Activated CD4-positive, alpha-beta T cell treated with anti-CD3 and anti-CD28 coated beads, Interleukin-2, amount 10 ng/mL, durations not matched to agents 24 days and 14 days (primary cell): ENCODE measurements at regions of chr4 and their contacts with region 1.

Region 1: DNA sequence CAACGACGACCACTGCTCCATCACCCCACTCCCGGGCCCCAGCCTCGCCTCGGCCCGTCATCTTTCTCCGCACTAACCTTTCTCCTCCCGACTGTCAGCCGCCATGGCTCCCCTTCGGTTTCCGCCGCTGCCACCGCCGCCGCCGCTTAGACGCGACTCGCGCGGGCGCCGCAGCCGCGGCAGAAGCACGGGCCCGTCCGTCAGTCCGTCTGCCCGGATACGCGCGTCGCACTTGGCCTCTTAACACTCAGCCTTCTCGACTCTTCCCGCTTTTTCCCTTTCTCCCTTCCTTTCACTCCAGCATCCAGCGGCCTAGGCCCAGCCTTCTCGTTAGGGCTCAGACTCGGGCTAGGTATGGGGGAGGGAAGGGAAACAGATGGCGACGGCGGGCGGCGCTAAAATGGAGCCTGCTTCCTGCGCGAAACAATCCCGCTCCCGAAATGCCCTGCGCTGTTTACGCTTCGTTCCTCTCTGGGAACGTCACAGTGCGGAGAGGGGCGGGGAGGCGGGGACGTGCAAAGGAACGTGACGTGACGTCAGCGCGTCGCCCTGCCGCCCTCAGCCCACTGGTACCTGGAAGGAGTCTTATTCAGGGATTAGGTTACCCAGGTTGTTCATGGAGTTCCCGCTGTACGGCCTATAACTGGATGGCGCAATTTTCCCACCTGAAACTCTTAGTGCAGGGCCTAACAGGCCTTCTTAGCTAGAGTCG is at the start of gene YTHDC1:
- DNase-seq: peak; percentile 98
- H3K4me3 Mint-ChIP-seq: peak within 1 kb of the TSS; percentile 88
- H3K27ac Mint-ChIP-seq: peak within 1 kb of the TSS; percentile 93
- H3K4me1 Mint-ChIP-seq: peaks cover 23% of the 10 kb centered on the region
- H3K27me3 Mint-ChIP-seq: peaks cover 15% of the 10 kb centered on the region
- total RNA-seq, gene YTHDC1: 79.9 and 83.9 TPM in 2 replicates

Region 2: DNA sequence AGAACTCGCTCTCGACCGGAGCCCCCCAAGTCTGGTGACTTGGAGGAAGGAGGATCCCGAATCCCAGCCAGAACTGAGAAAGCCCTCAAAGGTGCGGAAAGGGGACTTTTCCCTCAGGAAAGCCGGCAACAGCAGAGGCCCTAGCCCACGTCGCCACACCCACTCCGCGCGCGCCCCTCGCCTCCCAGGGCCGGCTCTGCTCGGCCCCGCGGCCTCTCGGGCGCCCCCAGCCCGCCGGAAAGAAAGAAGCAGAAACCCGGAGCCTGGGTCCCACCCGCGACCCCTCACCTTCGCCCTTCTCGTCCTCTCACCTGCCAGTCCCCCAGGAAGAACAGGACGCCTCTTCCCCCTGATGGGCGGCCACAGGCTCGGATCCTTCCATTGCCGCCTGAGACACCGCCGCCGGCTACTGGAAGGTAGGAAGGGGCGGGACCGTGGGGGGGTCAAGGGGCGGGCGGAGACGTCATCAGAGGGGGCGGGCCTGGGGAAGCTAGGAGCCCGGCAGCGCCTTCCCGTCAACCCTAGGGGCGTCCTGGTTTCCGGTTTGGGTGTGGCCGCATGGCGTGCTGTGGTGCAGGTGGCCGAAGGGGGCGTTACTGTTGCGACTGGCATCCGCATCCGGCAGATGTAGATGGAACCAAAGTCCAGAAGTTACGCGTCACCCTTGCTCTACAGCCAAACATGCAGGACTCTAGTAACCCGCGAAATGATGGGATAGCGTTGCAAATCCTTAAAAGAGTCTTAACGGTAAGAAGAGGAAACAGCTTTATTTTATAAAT is 648.9 kb before region 1 on chr4 and contains the start of gene UBA6:
- intact Hi-C with region 1: loop called (anchors 1 kb)
- DNase-seq: peak; percentile 98
- H3K4me3 Mint-ChIP-seq: peak within 1 kb of the TSS; percentile 96
- H3K27ac Mint-ChIP-seq: peak within 1 kb of the TSS; percentile 97
- H3K4me1 Mint-ChIP-seq: peaks cover 46% of the 10 kb centered on the region
- H3K27me3 Mint-ChIP-seq: no peaks in the 10 kb centered on the region
- total RNA-seq, gene UBA6: 78.2 and 85.4 TPM in 2 replicates

Region 3: DNA sequence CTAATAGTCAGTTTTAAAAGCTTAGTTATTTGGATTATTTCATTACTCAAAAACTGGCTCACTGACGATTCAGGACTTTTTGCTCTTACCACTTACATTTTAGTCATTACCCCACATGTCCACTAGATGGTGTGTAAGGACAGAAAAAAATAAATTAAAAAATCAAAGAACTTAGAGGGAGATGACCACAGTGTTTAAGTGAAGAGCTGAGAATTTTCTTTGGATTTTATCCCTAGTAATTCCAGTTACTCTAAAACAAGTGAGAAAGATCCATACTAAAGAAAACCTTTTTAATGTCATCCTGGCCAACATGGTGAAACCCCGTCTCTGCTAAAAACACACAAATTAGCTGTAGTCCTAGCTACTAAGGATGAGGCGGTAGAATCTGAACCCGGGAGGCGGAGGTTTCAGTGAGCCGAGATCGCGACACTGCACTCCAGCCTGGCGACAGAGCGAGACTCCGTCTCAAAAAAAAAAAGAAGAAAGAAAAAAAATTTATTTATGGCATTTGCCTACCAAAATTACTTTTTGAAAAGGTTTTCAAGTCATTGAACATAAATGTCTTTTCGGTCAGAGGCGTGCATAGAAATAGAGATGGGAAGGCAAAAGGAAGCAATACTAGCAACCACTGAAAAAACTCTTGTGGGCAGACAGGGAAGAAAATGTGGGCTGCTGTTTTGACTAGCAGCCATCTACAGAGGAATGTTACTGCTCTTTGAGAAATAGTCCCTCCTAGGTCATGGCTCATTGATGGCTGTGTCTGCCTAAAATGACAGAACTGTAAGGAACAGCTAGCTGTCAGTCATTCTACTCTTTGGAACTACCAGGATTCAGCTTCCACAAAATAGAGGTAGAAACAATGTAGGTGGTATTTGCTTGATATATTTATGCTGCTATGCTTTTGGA is 77.7 kb before region 1 on chr4:
- intact Hi-C with region 1: loop called (anchors 2 kb)
- DNase-seq: no peak
- H3K4me3 Mint-ChIP-seq: peak overlapping the region; percentile 55
- H3K27ac Mint-ChIP-seq: no peak overlapping the region
- H3K4me1 Mint-ChIP-seq: peaks cover 14% of the 10 kb centered on the region
- H3K27me3 Mint-ChIP-seq: peaks cover 14% of the 10 kb centered on the region

Region 4: GRCh38 chr4:68338608-68339007 is 11.2 kb before region 1 on chr4:
- intact Hi-C with region 1: loop called (anchors 2 kb)
- DNase-seq: no peak
- H3K4me3 Mint-ChIP-seq: no peak overlapping the region
- H3K27ac Mint-ChIP-seq: no peak overlapping the region
- H3K4me1 Mint-ChIP-seq: peaks cover 23% of the 10 kb centered on the region
- H3K27me3 Mint-ChIP-seq: no peaks in the 10 kb centered on the region